Lower leg skin (tissue), 4 donors: ENCODE measurements at regions of chr5 and their contacts with region 1.

Region 1: DNA sequence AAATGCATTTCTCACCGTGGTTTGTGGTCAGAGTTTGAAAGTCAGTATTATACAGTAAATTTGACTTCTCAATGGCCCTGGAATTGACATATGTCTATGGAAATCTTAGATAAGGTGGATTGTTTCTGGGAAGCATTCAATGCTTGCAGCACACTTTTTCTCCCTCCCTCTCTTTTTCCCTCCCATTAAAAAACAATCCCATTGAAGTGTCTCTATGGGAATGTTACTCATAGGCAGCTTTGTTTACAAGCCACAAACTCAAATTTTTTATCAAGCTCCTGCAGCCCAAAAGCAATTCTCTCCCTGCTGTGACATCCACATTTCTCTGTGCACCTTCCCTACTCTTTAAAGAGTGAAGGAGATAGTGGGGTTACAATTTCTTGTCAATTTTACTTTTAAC is 292.1 kb downstream of the ARRDC3 start:
- DNase-seq: no peak
- H3K4me3 ChIP-seq: no peak overlapping the region
- CTCF ChIP-seq: no peak
- POLR2A ChIP-seq: no peak

Region 2: DNA sequence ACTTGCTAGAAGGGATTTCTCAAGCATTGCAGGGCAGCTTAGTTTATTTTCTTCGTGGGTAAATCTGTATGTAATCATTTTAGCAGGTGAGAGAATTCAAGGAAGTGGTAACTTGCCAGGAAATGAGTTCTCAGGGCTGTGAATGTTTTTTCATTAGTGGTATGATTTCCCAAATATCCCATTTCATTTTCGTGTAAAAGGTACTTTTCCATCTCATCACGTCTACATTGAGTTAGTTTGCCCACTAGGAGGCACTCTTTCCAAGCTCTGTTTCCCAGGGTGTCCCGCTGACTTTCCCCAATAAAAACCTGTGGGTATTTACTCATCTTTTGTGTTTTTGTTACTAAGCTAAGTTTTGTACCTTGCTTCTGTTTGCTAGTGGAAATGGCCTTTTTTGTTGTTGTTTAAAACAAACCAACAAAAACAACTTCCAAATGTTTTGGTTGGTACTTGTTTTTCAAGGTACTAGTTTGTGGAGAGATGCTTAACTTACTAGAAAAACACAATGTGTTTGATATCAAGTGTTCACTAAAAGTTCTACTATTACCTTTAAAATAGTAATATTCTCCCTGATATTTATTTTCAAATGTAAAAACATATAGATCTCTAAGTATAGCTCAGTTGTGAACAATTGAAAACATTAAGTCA is 158.8 kb before region 1 on chr5:
- intact Hi-C with region 1: loop called (anchors 5 kb)
- DNase-seq: peak in 1 of 2 donors; percentile 51
- H3K4me3 ChIP-seq: no peak overlapping the region
- CTCF ChIP-seq: peak in 1 of 3 donors; percentile 51
- POLR2A ChIP-seq: no peak